ENCODE measurements at regions of chr14 and their contacts with region 1.

Region 1: DNA sequence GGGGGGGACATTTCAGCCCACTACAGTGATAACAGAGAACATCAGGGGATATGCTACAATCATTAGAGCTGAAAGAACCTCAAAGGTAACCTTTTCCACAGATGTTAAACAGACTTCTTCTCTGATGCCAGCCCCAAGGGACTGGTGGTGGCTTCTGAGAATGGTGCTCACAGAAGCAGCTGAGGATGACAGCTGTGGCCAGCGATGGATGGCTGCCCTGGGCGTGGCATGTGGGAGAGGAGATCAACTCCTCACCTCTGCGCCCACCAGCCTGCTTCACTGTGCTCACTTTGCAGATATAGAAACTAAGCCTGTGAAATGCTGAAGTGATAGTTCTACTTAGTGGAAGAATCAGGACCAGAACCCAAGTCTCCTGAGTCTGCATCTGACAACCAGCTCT is 33.0 kb downstream of the FOXN3 start:
- DNase-seq: peak in 2 of 3 donors; percentile 45 to 64
- H3K4me3 ChIP-seq: no peak overlapping the region
- H3K27ac ChIP-seq: no peak overlapping the region
- H3K4me1 ChIP-seq: peaks cover 3 to 4% (median 4%) of the 10 kb centered on the region in 4 experiments
- H3K27me3 ChIP-seq: no peaks in the 10 kb centered on the region

Region 2: DNA sequence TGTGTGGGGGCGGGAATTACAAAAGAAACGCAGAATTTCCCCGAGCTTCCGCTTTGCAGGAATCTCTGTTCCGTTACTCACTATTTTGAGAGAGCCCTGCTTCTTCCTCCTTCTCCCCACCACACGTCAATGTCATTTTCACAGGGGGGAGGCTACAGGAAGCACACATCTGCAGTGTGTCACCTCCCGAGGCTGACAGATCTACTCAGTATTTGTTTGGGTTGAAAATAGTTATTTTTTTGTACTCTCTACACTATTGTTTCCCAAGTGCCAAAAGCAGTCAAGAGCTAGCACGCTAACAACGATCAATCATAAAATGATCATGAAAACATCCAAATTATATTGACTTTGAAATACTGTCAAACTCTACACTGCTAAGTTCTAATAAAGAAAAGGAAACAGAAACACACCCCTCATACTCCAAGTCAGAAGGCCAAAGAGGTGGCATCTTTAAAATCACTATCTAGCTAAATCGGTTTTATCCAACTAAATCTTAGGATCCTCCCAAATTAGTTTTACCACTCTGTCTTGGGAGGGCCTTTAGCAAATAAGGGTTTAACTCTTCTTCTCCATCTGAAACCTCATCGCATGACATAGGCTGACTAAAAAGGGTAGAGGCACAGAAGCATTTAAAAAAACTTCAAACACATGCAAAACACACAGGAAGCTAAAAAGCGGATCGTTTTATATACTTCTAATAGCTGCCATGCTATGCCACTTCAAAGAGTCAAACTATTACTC is 18.8 kb before region 1 on chr14:
- CTCF ChIA-PET with region 1: interaction called, 10 read pairs
- POLR2A ChIA-PET with region 1: no interaction called
- DNase-seq: peak; percentile 58 to 90 (median 86)
- H3K4me3 ChIP-seq: peak overlapping the region in 4 of 7 experiments; percentile 30 to 56 (median 46)
- H3K27ac ChIP-seq: peak overlapping the region; percentile 43 to 62
- H3K4me1 ChIP-seq: peaks cover 28 to 54% (median 47%) of the 10 kb centered on the region in 4 experiments
- H3K27me3 ChIP-seq: no peaks in the 10 kb centered on the region

Region 3: GRCh38 chr14:90288651-90289355 is 904.8 kb after region 1 on chr14:
- CTCF ChIA-PET with region 1: no interaction called
- POLR2A ChIA-PET with region 1: no interaction called
- DNase-seq: no peak
- H3K4me3 ChIP-seq: no peak overlapping the region
- H3K27ac ChIP-seq: no peak overlapping the region
- H3K4me1 ChIP-seq: no peaks in the 10 kb centered on the region
- H3K27me3 ChIP-seq: no peaks in the 10 kb centered on the region

Measured in common myeloid progenitor, CD34-positive (primary cell).